Motor neuron (in vitro differentiated cells): ENCODE measurements at regions of chr9 and their contacts with region 1.

Region 1: GRCh38 chr9:82961504-82962125 is 101.3 kb downstream of the RASEF start:
- ATAC-seq: peak; percentile 71 to 97 (median 90)
- H3K4me3 ChIP-seq: no peak overlapping the region
- H3K27ac ChIP-seq: no peak overlapping the region
- H3K4me1 ChIP-seq: peaks cover 11 to 22% of the 10 kb centered on the region in 2 donors

Region 2: DNA sequence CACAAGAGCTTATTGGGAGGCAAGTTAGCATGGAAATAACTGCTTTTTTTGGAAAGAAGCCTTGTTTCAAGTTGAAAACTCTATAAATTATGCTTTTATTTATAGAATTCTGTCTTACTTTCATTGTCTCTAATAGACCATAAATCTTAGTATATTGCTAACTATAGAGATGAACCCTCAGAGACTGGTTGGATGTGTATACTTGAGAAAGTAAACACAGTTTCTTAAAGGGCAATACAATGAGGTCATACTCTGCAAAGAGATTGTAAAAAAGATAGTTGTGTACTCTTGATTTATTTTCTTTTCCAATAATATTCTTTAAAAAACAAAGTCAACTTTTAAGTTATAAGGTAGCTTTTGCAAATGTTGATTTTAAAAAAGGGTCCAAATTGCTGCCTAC is 442.7 kb before region 1 on chr9:
- in situ Hi-C with region 1: no loop called
- ATAC-seq: no peak
- H3K4me3 ChIP-seq: no peak overlapping the region
- H3K27ac ChIP-seq: no peak overlapping the region
- H3K4me1 ChIP-seq: no peaks in the 10 kb centered on the region

Region 3: GRCh38 chr9:82532504-82533180 is 429.0 kb before region 1 on chr9:
- in situ Hi-C with region 1: loop called in 1 of 9 experiments (anchors 25 kb)
- ATAC-seq: peak; percentile 54 to 72 (median 65)
- H3K4me3 ChIP-seq: no peak overlapping the region
- H3K27ac ChIP-seq: no peak overlapping the region
- H3K4me1 ChIP-seq: peaks cover 0 to 5% of the 10 kb centered on the region in 2 donors

Region 4: DNA sequence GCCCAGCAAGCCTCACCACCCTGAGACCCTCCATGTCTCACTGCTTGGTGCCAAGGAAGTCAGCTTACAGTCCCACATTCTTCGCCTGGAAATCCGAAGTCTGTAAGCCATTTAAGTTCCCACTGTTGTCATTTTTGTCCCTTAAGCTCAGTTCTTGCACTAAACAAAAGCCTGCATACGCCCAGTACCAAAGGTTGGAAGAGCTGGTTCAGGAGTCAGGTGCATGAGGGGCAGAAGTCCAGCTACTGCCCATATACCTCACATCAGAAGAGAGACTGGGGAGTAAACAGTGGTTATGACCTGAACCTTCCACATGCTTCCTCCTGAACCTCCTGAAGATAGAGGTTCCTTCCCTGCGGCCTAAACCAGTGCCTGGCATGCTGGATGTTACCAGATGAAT is 430.6 kb after region 1 on chr9:
- in situ Hi-C with region 1: no loop called
- ATAC-seq: no peak
- H3K4me3 ChIP-seq: no peak overlapping the region
- H3K27ac ChIP-seq: no peak overlapping the region
- H3K4me1 ChIP-seq: no peaks in the 10 kb centered on the region